Activated CD4-positive, alpha-beta T cell treated with anti-CD3 and anti-CD28 coated beads for 36 hours (primary cell): ENCODE measurements at regions of chr13 and their contacts with region 1.

Region 1: DNA sequence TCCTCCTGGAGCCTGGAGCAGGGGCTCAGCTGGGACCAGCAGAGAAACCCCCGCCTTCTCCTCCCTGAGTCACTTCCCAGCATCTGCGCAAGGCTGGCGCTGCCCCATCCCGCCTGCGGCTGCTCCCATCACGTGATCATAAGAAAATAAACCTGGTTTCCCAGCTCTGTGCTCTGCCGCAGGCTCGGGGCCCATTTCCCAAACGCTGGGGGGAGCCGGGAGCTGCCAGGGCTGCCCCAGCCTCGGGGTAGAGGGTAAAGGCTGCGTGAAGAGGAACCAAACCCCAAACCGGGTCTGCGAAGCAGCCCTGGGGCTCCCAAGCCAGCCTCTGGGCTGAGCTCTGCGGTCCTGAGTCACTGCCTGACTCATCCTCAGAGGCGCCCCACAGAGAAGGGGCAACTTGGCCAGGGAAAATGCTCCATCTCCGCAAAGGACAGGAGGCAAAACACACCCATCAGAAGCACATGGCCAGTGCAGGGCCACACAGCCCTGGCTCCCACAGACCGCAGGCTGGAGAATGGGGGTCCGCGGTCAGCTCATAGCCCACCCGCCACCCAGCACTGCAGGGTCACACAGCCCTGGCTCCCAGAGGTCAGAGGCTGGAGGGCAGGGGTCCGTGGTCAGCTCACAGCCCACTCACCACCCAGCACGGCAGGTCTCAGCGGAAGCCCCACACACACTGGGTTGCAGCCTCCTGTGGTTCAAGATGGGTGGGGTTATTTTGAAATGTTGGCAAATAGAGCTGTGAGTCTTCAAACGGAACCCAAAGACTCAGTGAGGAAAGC is 67.1 kb downstream of the RASA3 start:
- DNase-seq: peak; percentile 91
- ATAC-seq: peak; percentile 82
- H3K4me3 Mint-ChIP-seq: peak overlapping the region; percentile 69
- H3K27ac Mint-ChIP-seq: peak overlapping the region; percentile 95
- H3K4me1 Mint-ChIP-seq: peaks cover 69% of the 10 kb centered on the region
- H3K27me3 Mint-ChIP-seq: no peaks in the 10 kb centered on the region

Region 2: DNA sequence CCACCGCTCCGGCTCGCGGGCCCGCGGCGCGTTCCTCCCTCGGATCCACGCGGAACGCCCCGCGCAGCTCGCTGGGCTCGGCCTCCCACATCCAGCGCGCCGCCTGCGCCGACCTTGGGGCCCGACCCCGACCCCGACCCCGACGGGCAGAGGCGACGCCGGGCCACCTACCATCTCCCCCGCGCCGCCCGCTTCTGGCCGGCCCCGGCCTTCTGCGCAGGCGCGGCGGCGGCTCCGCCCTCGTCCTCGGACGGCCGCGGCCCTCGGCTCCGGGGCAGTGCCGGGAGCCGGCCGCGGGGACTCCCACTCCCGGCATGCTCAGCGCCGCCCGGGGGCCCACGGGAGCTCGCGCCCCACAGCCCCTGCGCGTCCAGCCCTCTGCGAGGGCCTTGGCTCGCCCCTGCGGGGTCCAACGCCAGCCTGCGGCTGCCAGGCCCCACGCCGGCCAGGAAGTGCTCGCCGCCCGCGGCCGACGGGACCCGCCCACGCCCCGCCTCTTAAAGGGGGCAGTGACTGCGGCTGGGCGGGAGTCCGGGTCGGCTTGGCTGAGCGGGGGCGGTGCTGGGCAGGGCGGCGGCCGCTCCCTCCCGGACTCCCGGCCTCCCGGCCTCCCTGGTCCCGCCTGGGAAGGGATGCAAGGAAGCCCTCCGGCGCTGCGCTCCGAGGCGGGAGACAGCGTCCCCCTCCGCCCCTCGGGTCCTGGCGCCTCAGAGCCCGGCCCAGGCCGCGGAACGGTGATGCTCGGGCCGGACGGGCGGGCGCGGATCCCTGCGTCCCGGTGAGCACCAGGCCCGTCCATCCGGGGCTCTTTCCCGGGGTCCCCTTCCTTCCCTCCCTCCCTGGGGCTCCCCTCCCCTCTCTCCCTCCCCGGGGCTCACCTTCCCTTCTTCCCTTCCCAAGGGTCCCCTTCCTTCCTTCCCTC is 574.6 kb before region 1 on chr13 and contains the start of gene DCUN1D2:
- CTCF ChIA-PET with region 1: no interaction called
- POLR2A ChIA-PET with region 1: no interaction called
- intact Hi-C with region 1: loop called in 1 of 2 experiments (anchors 10 kb)
- DNase-seq: peak; percentile 83
- ATAC-seq: peak; percentile 72
- H3K4me3 Mint-ChIP-seq: peak within 1 kb of the TSS; percentile 85
- H3K27ac Mint-ChIP-seq: peak within 1 kb of the TSS; percentile 86
- H3K4me1 Mint-ChIP-seq: peaks cover 64% of the 10 kb centered on the region
- H3K27me3 Mint-ChIP-seq: no peaks in the 10 kb centered on the region
- total RNA-seq, gene DCUN1D2: 12.1 to 15.3 TPM

Region 3: DNA sequence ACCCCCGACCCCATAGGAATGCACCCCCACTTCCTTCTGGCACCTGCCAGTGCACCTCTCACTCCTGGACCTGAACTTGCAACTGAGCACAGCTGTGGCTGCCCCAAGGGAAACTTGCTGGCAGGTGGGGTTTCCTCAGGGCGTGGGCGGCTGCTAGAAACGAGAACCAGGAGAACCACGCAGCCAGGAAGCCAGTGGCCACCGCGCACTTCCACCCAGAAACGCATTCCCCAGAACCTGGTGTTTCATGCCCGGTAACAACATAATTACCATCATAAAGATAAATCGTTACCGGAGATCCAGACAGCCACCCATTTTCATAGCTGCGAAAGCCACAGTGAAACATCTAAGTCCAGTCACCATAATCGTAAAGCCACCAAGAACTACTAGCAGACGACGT is 16.3 kb before region 1 on chr13:
- CTCF ChIA-PET with region 1: interaction called, 3 read pairs
- POLR2A ChIA-PET with region 1: interaction called, 5 read pairs
- intact Hi-C with region 1: loop called in 1 of 2 experiments (anchors 1 kb)
- DNase-seq: peak; percentile 80
- ATAC-seq: peak; percentile 62
- H3K4me3 Mint-ChIP-seq: peak overlapping the region; percentile 30
- H3K27ac Mint-ChIP-seq: peak overlapping the region; percentile 88
- H3K4me1 Mint-ChIP-seq: peaks cover 63% of the 10 kb centered on the region
- H3K27me3 Mint-ChIP-seq: no peaks in the 10 kb centered on the region

Region 4: GRCh38 chr13:114124921-114125320 is 59.6 kb after region 1 on chr13:
- CTCF ChIA-PET with region 1: interaction called, 3 read pairs
- POLR2A ChIA-PET with region 1: interaction called, 3 read pairs
- intact Hi-C with region 1: loop called (anchors 1 kb)
- DNase-seq: peak; percentile 90
- ATAC-seq: peak; percentile 58
- H3K4me3 Mint-ChIP-seq: peak overlapping the region; percentile 21
- H3K27ac Mint-ChIP-seq: peak overlapping the region; percentile 91
- H3K4me1 Mint-ChIP-seq: peaks cover 85% of the 10 kb centered on the region
- H3K27me3 Mint-ChIP-seq: no peaks in the 10 kb centered on the region

Region 5: DNA sequence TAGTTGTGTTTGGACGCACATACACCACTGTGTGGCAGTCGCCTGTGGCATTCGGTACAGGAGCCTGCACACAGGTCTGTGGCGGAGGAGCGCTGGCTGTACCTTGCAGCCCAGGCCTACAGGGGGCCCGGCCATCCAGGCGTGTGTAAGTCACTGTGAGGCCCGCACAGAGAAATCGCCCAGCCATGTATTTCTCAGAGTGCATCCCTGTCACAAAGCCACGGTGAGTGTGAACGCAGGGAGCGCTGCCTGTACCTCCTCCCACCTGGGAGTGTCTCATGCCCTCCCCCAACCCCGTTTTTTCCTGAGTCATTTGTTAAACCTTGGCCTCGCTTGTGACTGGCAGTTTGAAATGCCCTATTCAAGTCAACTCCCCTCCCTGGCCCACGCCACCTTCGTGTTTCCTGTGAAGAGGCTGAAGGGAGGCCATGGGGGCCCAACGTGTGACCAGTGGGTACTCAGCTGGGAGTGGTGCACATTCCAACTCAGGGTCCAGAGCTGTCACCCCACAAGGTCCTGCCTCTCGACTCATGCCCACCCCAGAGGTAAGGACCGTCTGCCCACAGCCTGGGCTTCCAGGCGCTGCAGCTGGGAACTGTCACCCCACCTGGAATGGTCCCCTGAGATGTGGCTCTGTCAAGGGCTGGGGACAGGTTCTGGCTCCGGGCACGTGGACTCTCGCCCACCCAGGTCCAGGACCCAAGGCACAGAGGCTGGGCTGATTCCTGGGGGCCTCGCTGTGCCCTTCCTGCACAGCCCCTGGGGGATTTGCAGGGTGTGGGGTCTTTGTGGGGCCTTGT is 78.7 kb after region 1 on chr13:
- CTCF ChIA-PET with region 1: interaction called, 3 read pairs
- POLR2A ChIA-PET with region 1: interaction called, 9 read pairs
- intact Hi-C with region 1: loop called in 1 of 2 experiments (anchors 1 kb)
- DNase-seq: peak; percentile 76
- ATAC-seq: peak; percentile 47
- H3K4me3 Mint-ChIP-seq: no peak overlapping the region
- H3K27ac Mint-ChIP-seq: peak overlapping the region; percentile 39
- H3K4me1 Mint-ChIP-seq: peaks cover 12% of the 10 kb centered on the region
- H3K27me3 Mint-ChIP-seq: no peaks in the 10 kb centered on the region

Region 6: GRCh38 chr13:114234645-114235421 is 169.5 kb after region 1 on chr13 and contains the start of gene CDC16:
- CTCF ChIA-PET with region 1: interaction called, 4 read pairs
- POLR2A ChIA-PET with region 1: no interaction called
- intact Hi-C with region 1: loop called in 1 of 2 experiments (anchors 2 kb)
- DNase-seq: peak; percentile 95
- ATAC-seq: peak; percentile 94
- H3K4me3 Mint-ChIP-seq: peak within 1 kb of the TSS; percentile 85
- H3K27ac Mint-ChIP-seq: peak within 1 kb of the TSS; percentile 95
- H3K4me1 Mint-ChIP-seq: peaks cover 40% of the 10 kb centered on the region
- H3K27me3 Mint-ChIP-seq: no peaks in the 10 kb centered on the region
- total RNA-seq, gene CDC16: 83.5 to 90.8 TPM

Region 7: GRCh38 chr13:114314074-114314912 is 249.0 kb after region 1 on chr13 and contains the start of gene CHAMP1:
- CTCF ChIA-PET with region 1: no interaction called
- POLR2A ChIA-PET with region 1: interaction called, 4 read pairs
- intact Hi-C with region 1: loop called in 1 of 2 experiments (anchors 1 kb)
- DNase-seq: peak; percentile 97
- ATAC-seq: peak; percentile 77
- H3K4me3 Mint-ChIP-seq: peak within 1 kb of the TSS; percentile 97
- H3K27ac Mint-ChIP-seq: peak within 1 kb of the TSS; percentile 98
- H3K4me1 Mint-ChIP-seq: peaks cover 43% of the 10 kb centered on the region
- H3K27me3 Mint-ChIP-seq: no peaks in the 10 kb centered on the region
- total RNA-seq, gene CHAMP1: 39.4 to 54.3 TPM